Activated CD4-positive, alpha-beta memory T cell treated with anti-CD3 and anti-CD28 coated beads, Interleukin-2, amount 10 ng/mL, durations not matched to agents 7 days and 5 days (primary cell): ENCODE measurements at regions of chr11 and their contacts with region 1.

Region 1: GRCh38 chr11:102390667-102391465 is 43.9 kb downstream of the BIRC2 start:
- DNase-seq: peak; percentile 59
- H3K4me3 Mint-ChIP-seq: no peak overlapping the region
- H3K27ac Mint-ChIP-seq: peak overlapping the region; percentile 23
- H3K4me1 Mint-ChIP-seq: peaks cover 13% of the 10 kb centered on the region
- H3K27me3 Mint-ChIP-seq: no peaks in the 10 kb centered on the region

Region 2: GRCh38 chr11:102375720-102376399 is 15.0 kb before region 1 on chr11:
- CTCF ChIA-PET with region 1: interaction called, 16 read pairs
- POLR2A ChIA-PET with region 1: no interaction called
- DNase-seq: no peak
- H3K4me3 Mint-ChIP-seq: no peak overlapping the region
- H3K27ac Mint-ChIP-seq: no peak overlapping the region
- H3K4me1 Mint-ChIP-seq: peaks cover 13% of the 10 kb centered on the region
- H3K27me3 Mint-ChIP-seq: no peaks in the 10 kb centered on the region

Region 3: DNA sequence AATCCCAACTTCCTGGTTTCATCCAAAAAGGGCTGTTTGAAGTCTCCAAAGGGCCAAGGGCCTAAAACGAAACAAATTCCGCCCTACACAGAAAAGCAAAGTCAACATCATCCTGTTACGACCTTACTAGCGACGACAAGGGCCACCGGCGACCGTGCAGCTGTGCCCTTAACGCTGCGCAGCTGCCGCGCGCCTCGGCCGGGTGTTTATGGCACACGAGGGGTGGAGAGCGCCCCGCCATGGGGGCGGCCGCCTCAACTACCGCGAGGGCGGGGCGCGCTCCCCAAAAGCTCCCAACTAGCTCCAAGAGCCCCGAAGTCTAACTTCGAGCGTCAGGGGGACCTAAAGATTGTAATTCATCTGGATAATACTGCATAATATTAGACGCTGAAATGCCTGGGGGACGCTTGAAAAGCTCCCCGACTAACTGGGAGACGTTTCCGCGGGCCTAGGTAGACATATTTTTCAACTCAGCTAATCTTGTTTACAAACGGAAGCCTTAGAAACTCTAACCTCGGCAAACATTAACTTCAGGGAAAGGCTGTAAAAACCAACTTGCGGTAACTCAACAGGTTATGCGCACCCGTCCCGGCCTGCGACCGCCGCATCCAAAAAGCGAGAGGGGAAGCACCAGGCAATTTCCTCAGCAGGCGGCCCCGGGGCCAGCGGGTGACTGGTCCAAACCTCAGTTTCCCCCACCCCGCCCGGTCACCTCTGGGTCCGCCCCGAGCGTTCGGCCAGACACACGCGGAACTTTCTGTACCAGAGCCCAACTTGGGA is 61.0 kb after region 1 on chr11:
- CTCF ChIA-PET with region 1: interaction called, 16 read pairs
- POLR2A ChIA-PET with region 1: interaction called, 10 read pairs
- DNase-seq: peak; percentile 85
- H3K4me3 Mint-ChIP-seq: peak overlapping the region; percentile 96
- H3K27ac Mint-ChIP-seq: peak overlapping the region; percentile 93
- H3K4me1 Mint-ChIP-seq: peaks cover 77% of the 10 kb centered on the region
- H3K27me3 Mint-ChIP-seq: no peaks in the 10 kb centered on the region

Region 4: GRCh38 chr11:102495161-102496042 is 104.5 kb after region 1 on chr11:
- CTCF ChIA-PET with region 1: interaction called, 72 read pairs
- POLR2A ChIA-PET with region 1: interaction called, 4 read pairs
- DNase-seq: peak; percentile 24
- H3K4me3 Mint-ChIP-seq: no peak overlapping the region
- H3K27ac Mint-ChIP-seq: no peak overlapping the region
- H3K4me1 Mint-ChIP-seq: peaks cover 7% of the 10 kb centered on the region
- H3K27me3 Mint-ChIP-seq: peaks cover 24% of the 10 kb centered on the region

Region 5: DNA sequence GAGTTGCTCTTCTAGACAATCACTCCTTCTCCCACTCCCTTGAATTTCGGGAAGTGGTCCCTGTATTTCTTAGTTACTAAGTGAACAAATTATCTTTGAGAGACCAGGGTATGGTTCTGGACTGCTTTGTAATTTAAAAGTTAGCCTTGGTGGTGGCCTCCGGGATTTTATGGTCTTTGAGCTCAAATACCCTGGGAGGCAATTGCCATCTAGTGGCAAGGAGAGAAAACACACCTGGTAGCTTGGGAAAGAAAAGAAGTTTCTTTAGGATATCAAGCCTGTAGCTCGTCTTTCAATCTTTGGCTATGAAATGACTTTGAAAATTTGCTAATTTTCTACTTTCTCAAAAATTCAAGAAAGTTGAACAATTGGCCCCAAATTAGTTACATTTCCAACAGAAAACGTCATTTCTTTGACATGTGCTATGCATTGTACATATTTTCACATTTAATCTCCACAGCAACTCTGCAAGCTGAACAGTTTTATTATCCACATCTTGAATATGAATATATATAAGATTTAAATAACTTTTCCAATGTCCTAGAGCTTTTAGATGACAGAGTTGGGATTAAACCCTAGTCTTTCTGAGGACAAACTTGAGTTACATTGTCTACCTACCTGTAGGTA is 275.6 kb after region 1 on chr11:
- CTCF ChIA-PET with region 1: interaction called, 20 read pairs
- POLR2A ChIA-PET with region 1: no interaction called
- DNase-seq: no peak
- H3K4me3 Mint-ChIP-seq: no peak overlapping the region
- H3K27ac Mint-ChIP-seq: no peak overlapping the region
- H3K4me1 Mint-ChIP-seq: no peaks in the 10 kb centered on the region
- H3K27me3 Mint-ChIP-seq: peaks cover 5% of the 10 kb centered on the region